Activated CD4-positive, alpha-beta memory T cell treated with anti-CD3 and anti-CD28 coated beads for 36 hours (primary cell): ENCODE measurements at regions of chr6 and their contacts with region 1.

Region 1: GRCh38 chr6:111210194-111210728 is 123.0 kb downstream of the SLC16A10 start:
- DNase-seq: peak; percentile 11
- H3K4me3 Mint-ChIP-seq: no peak overlapping the region
- H3K27ac Mint-ChIP-seq: no peak overlapping the region
- H3K4me1 Mint-ChIP-seq: no peaks in the 10 kb centered on the region
- H3K27me3 Mint-ChIP-seq: no peaks in the 10 kb centered on the region

Region 2: DNA sequence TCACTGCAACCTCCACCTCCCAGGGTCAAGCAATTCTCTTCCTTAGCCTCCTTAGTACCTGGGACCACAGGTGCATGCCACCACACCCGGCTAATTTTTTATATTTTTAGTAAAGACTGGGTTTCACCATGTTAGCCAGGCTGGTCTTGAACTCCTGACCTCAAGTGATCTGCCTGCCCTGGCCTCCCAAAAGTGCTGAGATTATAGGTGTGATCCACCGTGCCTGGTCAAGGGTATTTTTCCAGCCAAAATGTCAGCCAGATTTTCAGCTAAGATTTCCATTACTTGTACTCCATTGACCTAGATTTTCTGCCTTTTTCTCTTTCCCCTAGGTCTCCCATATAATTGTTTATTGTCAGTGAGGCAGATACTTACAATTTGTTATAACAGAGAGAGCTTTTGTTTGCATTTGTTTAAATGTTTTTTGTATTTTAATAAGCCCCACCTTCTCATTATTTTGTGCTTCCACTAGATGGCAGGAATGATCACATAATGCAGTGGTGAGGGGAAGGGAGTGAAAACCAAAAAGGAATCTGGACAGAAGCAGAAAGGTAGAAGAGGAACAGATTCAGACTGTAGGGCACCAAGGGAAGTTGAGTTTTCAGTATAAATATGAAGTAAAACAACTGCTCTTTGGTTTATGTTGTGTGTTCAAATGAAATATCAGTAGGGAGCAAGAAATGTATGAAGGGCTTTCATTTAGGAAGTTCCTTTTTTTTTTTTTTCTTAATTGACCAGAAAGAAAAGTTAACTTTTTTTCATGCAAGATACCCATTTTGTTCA is 198.7 kb before region 1 on chr6:
- CTCF ChIA-PET with region 1: interaction called, 54 read pairs
- POLR2A ChIA-PET with region 1: no interaction called
- intact Hi-C with region 1: loop called (anchors 1 kb)
- DNase-seq: no peak
- H3K4me3 Mint-ChIP-seq: no peak overlapping the region
- H3K27ac Mint-ChIP-seq: no peak overlapping the region
- H3K4me1 Mint-ChIP-seq: peaks cover 4% of the 10 kb centered on the region
- H3K27me3 Mint-ChIP-seq: no peaks in the 10 kb centered on the region

Region 3: GRCh38 chr6:111057074-111057752 is 153.0 kb before region 1 on chr6:
- CTCF ChIA-PET with region 1: interaction called, 118 read pairs
- POLR2A ChIA-PET with region 1: no interaction called
- intact Hi-C with region 1: loop called (anchors 1 kb)
- DNase-seq: no peak
- H3K4me3 Mint-ChIP-seq: no peak overlapping the region
- H3K27ac Mint-ChIP-seq: no peak overlapping the region
- H3K4me1 Mint-ChIP-seq: no peaks in the 10 kb centered on the region
- H3K27me3 Mint-ChIP-seq: peaks cover 2% of the 10 kb centered on the region

Region 4: DNA sequence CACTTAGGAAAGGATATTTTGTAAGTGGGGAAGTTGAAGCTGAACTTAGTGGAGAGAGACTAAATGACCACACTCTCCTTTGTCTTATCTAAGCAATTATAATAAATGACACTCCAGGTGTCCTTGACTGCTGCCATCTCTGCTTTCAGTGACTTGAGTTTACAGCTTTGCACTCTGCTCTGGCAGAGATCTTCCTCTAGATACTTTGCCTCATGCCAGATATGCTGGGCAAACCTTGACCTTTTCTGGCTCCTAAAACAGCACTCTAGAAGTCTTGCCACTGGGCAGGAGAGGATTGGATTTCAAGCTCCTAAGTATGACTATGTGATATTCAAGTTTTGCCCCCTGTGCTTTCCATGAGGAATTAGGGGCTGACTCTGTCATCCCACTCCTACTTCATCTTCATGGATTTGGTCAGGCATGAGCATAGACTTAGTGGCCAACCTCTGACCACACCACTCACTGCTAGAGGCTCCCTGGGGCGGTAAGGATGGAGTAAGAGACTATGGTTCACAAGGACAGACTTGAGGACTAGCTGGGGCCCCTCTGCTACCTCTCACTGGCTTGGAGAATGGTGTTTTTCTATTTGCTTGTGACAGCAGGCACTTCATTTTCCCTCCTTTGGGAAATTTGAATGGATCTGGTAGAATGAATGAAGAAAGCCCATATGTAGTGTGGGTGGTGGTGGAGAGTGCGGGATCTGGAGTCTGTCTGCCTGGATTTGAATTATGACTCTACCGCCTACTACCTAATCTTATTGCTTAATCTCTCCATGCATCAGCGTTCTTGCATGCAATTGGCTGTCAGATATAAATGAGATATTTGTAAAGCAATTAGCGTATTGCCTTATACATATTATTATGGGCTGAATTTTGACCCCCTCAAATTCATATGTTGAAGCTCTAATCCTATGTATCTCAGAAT is 81.3 kb after region 1 on chr6:
- CTCF ChIA-PET with region 1: no interaction called
- POLR2A ChIA-PET with region 1: no interaction called
- intact Hi-C with region 1: no loop called
- DNase-seq: no peak
- H3K4me3 Mint-ChIP-seq: no peak overlapping the region
- H3K27ac Mint-ChIP-seq: no peak overlapping the region
- H3K4me1 Mint-ChIP-seq: peaks cover 30% of the 10 kb centered on the region
- H3K27me3 Mint-ChIP-seq: no peaks in the 10 kb centered on the region